ENCODE measurements at regions of chr2 and their contacts with region 1.

Region 1: DNA sequence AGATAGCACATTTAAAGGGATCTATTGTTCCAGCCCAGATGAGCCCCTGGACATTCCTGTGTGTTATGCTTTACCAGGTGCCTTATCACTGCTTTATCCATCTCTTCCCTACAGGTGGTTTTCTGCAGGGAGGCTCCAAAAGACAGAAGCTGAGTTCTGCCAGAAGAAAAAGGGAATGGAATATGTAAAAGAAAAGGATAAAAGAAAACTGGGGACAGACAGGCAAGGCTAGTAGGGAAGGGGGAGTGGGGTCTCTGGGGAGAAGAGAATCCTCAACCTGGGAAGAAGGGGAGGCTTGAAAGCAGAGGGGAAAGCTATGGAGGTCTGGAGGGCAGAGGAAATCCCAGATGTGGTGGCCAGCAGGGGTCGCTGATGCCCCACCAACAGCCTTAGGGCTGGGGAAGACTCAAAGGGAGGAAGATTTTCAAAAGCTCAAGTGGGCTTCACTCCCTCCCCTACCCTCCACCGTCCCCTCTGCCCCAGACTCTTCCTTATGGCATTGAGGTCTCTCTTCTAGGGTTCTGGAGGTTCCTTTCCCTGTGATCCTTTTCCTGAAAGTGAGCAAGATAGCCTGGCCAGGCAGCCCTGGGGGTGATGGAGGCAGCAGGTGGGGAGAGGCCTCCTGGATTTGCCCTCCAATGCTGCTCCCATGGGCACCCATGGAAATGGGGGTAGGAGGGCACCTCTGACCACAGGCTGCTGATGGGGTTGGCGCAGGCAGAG is 178.1 kb upstream of the PKDCC start:
- DNase-seq: peak in 1 of 2 donors; percentile 85
- H3K4me3 ChIP-seq: no peak overlapping the region
- H3K27ac ChIP-seq: no peak overlapping the region
- H3K4me1 ChIP-seq: peaks cover 4 to 17% of the 10 kb centered on the region in 2 donors
- H3K27me3 ChIP-seq: no peaks in the 10 kb centered on the region
- CTCF ChIP-seq: peak; percentile 76 to 92 (median 88)

Region 2: DNA sequence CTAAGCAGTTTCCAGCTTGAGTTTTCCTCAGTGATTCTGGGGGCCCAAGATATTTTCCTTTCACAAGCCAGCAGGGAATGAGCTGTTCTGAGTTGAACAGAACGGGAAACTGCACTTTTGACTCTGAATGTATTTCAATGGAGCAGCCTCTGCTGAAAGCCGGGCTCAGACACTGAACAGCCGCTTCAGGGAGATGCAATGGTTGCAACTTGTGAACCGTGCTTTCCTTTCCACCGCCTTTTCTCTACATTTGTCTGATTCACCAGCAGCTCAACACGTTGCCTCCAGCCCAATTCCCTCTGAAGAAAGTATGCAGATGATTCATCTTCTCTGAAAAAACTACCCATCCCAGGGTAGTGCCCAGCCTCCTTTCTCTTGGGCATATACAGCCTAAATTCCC is 58.8 kb after region 1 on chr2:
- intact Hi-C with region 1: loop called (anchors 5 kb)
- DNase-seq: peak in 1 of 2 donors; percentile 62
- H3K4me3 ChIP-seq: no peak overlapping the region
- H3K27ac ChIP-seq: no peak overlapping the region
- H3K4me1 ChIP-seq: peaks cover 0 to 29% of the 10 kb centered on the region in 2 donors
- H3K27me3 ChIP-seq: no peaks in the 10 kb centered on the region
- CTCF ChIP-seq: no peak

Region 3: GRCh38 chr2:42077343-42077742 is 207.6 kb after region 1 on chr2:
- intact Hi-C with region 1: no loop called
- DNase-seq: no peak
- H3K4me3 ChIP-seq: no peak overlapping the region
- H3K27ac ChIP-seq: no peak overlapping the region
- H3K4me1 ChIP-seq: no peaks in the 10 kb centered on the region
- H3K27me3 ChIP-seq: no peaks in the 10 kb centered on the region
- CTCF ChIP-seq: peak in 1 of 3 experiments; percentile 22

Region 4: GRCh38 chr2:42183775-42184174 is 314.1 kb after region 1 on chr2:
- intact Hi-C with region 1: loop called (anchors 10 kb)
- DNase-seq: no peak
- H3K4me3 ChIP-seq: no peak overlapping the region
- H3K27ac ChIP-seq: no peak overlapping the region
- H3K4me1 ChIP-seq: peaks cover 4 to 53% of the 10 kb centered on the region in 2 donors
- H3K27me3 ChIP-seq: no peaks in the 10 kb centered on the region
- CTCF ChIP-seq: no peak